OCI-LY7 (cell line): ENCODE measurements at regions of chr18 and their contacts with region 1.

Region 1: GRCh38 chr18:22977847-22978701 is 44.9 kb downstream of the RBBP8 start:
- DNase-seq: no peak
- H3K4me3 ChIP-seq: no peak overlapping the region
- H3K27ac ChIP-seq: no peak overlapping the region
- H3K4me1 ChIP-seq: peaks cover 6% of the 10 kb centered on the region
- CTCF ChIP-seq: no peak

Region 2: GRCh38 chr18:22939649-22940048 is 38.4 kb before region 1 on chr18:
- CTCF ChIA-PET with region 1: no interaction called
- POLR2A ChIA-PET with region 1: interaction called, 3 read pairs
- intact Hi-C with region 1: loop called (anchors 5 kb)
- DNase-seq: no peak
- H3K4me3 ChIP-seq: no peak overlapping the region
- H3K27ac ChIP-seq: no peak overlapping the region
- H3K4me1 ChIP-seq: peaks cover 15% of the 10 kb centered on the region
- CTCF ChIP-seq: no peak

Region 3: DNA sequence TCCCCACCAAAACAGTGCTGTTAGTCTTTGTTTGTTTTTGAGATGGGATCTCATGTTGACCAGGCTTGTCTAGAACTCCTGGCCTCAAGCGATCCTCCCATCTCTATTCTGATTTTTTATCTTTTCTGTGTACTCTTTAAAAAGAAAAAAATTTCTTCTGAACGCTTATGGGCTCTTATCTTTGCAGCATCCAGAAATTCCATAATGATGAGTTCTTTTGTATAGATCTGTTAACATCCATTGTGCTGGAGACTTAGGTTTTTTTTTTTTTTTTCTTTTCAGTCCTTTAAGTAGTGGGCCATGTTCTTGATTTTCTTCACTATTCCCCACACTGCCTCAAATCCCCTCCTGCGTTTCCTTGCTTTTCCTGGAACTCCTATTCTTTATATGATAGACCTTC is 14.0 kb before region 1 on chr18:
- CTCF ChIA-PET with region 1: no interaction called
- POLR2A ChIA-PET with region 1: interaction called, 24 read pairs
- intact Hi-C with region 1: no loop called
- DNase-seq: no peak
- H3K4me3 ChIP-seq: no peak overlapping the region
- H3K27ac ChIP-seq: no peak overlapping the region
- H3K4me1 ChIP-seq: no peaks in the 10 kb centered on the region
- CTCF ChIP-seq: no peak

Region 4: DNA sequence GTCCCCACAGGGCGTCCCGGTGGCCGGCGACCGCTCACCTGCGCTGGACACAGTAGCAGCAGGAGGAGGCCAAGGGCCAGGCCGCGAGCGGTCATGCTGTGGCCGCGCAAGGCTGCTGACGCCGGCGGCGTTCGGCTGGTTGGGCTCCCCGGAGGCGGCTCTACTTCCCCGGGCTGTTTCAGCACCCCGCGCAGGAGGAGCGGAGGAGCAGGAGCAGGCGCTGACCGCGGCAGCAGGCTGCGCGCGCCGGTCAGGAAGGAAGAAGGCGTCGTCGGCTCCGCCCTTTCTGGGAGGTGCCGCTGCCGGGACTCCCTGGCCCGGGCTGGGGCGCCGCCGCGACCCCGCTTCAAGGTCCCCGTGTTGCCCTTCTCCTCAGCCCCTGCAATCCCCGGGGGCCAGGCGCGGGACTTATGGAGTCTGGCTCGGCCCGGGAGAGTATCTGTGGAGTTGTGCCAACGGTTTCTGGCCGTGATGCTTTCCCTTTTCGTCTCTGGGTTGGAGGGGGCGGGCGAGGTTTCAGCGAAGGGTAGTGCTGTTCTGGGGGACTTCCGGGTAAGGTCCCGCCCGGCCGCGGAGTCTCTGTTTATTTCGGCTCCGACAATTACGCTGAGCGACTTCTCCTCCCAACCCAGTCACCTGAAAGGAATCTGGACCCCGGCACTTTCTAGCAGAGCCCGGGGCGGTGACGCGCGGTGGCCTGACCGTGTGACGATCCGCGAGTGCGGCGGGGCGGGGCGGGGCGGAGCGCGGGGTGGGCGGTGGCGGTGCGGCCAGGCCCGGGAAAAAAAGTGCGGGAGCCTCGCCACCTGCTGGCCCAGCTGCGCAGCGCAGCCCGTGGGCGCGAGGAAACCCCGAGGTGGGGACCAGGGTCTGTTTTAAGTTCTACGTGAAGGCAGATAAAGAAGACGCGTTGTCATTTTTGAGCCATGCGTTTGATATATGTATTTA is 608.4 kb after region 1 on chr18 and contains the start of gene NPC1:
- CTCF ChIA-PET with region 1: no interaction called
- POLR2A ChIA-PET with region 1: no interaction called
- intact Hi-C with region 1: no loop called
- DNase-seq: peak; percentile 94
- H3K4me3 ChIP-seq: peak within 1 kb of the TSS; percentile 87
- H3K27ac ChIP-seq: peak within 1 kb of the TSS; percentile 85
- H3K4me1 ChIP-seq: peaks cover 22% of the 10 kb centered on the region
- CTCF ChIP-seq: peak; percentile 84
- total RNA-seq, gene NPC1: 22.3 and 26.0 TPM in 2 replicates